ENCODE measurements at regions of chr14 and their contacts with region 1.

Region 1: DNA sequence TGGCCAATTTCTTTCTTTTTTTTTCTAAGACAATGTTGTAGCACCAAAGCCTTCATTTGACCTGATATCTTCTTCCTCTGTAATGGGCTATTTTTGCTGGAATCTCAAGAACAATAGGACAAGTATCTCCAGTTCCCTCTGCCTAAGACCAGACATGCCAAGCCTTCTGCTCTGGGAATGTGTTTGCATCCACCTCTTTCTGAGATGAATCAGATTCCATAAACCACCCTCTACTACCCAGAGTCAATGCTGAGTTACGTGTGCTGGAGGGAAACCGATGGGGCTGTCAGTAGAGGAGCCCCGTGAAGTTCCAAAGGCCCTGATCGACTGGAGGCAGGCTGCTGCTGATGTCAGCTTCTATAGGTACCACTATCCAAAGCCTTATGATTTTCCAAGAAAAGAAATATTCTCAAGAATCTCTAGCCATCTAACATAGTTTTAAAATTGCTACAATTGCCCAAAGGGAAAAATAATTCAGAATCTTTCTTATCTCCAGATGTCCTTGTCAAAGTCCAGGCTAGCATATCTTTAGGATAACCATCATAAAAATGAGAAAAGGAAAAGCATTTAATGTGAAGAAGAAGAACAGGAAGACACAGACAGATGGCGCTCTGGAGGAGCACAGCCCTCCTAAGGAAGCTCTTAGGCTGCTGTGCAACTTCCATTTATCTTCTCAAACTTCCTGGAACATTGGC is 101.9 kb downstream of the SLC8A3 start:
- DNase-seq: no peak
- ATAC-seq: no peak
- H3K4me3 Mint-ChIP-seq: no peak overlapping the region
- H3K27ac Mint-ChIP-seq: no peak overlapping the region
- H3K4me1 Mint-ChIP-seq: no peaks in the 10 kb centered on the region
- H3K27me3 Mint-ChIP-seq: peaks cover 34% of the 10 kb centered on the region

Region 2: DNA sequence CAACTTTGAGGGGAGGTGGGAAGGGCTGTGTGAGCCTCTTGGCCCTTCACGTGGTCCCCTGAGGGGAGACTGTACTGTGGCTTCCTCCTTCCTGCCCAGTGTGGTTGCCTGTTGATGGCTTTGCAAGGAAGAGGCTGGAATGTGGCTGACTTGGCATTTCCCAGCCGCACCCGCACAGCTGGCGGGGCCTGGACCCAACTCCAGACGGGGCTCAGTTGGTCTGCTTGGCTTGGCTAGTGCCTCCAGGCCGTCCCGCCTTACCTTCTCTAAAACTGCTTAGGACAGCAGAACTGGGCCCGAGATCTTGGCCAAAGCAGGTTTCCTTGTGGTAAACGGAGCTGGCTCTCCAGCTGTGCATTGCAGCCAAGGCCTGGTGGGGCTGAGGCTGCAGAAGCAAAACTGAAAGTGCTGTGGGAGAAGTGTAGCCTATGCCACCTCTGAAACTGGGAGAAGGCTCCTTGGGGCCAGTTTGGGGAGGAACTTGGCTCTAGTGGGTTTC is 68.1 kb before region 1 on chr14:
- CTCF ChIA-PET with region 1: no interaction called
- DNase-seq: peak; percentile 48
- ATAC-seq: peak; percentile 81
- H3K4me3 Mint-ChIP-seq: no peak overlapping the region
- H3K27ac Mint-ChIP-seq: no peak overlapping the region
- H3K4me1 Mint-ChIP-seq: peaks cover 18% of the 10 kb centered on the region
- H3K27me3 Mint-ChIP-seq: peaks cover 18% of the 10 kb centered on the region

Region 3: GRCh38 chr14:70567791-70568190 is 481.0 kb after region 1 on chr14:
- CTCF ChIA-PET with region 1: interaction called, 10 read pairs
- DNase-seq: peak; percentile 59
- ATAC-seq: peak; percentile 76
- H3K4me3 Mint-ChIP-seq: no peak overlapping the region
- H3K27ac Mint-ChIP-seq: no peak overlapping the region
- H3K4me1 Mint-ChIP-seq: peaks cover 2% of the 10 kb centered on the region
- H3K27me3 Mint-ChIP-seq: no peaks in the 10 kb centered on the region